ENCODE measurements at regions of chr3 and their contacts with region 1.

Region 1: DNA sequence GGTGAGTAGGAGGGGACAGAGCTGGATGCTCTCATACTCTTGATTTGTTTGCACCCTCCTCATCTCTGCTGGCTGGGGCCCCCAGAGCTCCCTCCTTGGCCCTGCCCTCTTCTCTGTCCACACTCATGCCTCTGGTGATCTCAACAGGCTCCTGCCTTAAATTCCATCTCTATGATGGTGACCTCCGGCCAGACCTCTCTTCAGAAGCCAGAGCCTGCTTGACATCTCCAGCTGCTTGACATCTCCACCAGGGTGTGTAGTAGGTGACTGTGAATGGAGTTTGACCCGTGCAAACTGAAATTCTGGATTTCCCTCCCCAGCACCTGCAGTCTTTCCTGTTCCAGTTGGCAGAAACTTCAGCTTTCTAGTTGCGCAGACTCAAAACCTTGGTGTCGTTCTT is 4.3 kb upstream of the FGD5 start:
- DNase-seq: no peak
- ATAC-seq: no peak
- H3K4me3 ChIP-seq: no peak overlapping the region
- H3K27ac ChIP-seq: no peak overlapping the region
- H3K4me1 ChIP-seq: no peaks in the 10 kb centered on the region
- H3K27me3 ChIP-seq: peaks cover 32% of the 10 kb centered on the region
- CTCF ChIP-seq: no peak
- POLR2A ChIP-seq: no peak
- RAD21 ChIP-seq: no peak

Region 2: DNA sequence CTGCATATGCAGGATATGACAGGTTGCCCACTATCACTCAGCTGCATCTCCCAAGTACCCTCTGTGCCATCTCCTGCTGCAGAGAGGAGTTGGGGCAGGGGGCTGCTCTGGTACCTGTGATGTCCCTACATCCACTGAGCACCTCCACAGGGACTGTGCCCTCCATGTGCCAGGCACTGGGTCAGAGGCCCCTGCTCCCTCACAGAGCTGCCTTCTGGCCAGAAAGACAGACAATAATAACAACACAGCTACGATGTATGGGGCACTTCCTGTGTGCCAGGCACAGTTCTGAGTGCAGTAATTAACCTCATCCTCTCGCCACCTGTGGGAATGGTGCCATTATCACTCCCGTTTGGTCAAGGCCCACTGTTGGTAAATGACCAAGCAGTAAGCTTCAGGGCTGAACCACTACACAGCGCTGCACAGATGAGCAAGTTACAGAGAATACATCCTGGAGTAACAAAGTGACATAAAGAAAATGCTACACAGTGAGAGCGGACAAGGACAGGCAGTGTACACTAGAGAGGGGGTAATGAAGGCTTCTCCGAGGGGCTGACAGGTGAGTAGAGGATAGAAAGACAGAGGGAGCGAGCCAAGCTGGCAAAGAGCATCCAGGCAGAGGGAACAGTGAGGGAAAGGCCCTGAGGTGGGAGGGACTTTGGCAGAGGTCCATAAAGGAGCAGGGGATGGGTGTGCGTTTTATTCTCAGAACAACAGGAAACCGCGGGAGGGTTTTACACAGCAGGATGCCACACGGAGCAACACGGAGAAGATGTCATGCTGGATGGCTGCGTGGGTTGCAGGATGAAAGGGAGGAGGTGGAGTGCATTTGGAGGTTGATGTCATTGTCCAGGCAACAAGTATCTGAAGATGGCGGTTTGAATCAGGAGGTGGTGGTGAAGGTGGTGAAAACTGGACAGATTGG is 948.2 kb before region 1 on chr3:
- CTCF ChIA-PET with region 1: no interaction called
- POLR2A ChIA-PET with region 1: interaction called, 10 read pairs
- dilution Hi-C with region 1: no loop called
- in situ Hi-C with region 1: no loop called
- intact Hi-C with region 1: no loop called
- DNase-seq: no peak
- ATAC-seq: no peak
- H3K4me3 ChIP-seq: no peak overlapping the region
- H3K27ac ChIP-seq: no peak overlapping the region
- H3K4me1 ChIP-seq: no peaks in the 10 kb centered on the region
- H3K27me3 ChIP-seq: no peaks in the 10 kb centered on the region; the same call in 1 of the 2 replicates
- CTCF ChIP-seq: no peak
- POLR2A ChIP-seq: no peak
- RAD21 ChIP-seq: no peak

Region 3: DNA sequence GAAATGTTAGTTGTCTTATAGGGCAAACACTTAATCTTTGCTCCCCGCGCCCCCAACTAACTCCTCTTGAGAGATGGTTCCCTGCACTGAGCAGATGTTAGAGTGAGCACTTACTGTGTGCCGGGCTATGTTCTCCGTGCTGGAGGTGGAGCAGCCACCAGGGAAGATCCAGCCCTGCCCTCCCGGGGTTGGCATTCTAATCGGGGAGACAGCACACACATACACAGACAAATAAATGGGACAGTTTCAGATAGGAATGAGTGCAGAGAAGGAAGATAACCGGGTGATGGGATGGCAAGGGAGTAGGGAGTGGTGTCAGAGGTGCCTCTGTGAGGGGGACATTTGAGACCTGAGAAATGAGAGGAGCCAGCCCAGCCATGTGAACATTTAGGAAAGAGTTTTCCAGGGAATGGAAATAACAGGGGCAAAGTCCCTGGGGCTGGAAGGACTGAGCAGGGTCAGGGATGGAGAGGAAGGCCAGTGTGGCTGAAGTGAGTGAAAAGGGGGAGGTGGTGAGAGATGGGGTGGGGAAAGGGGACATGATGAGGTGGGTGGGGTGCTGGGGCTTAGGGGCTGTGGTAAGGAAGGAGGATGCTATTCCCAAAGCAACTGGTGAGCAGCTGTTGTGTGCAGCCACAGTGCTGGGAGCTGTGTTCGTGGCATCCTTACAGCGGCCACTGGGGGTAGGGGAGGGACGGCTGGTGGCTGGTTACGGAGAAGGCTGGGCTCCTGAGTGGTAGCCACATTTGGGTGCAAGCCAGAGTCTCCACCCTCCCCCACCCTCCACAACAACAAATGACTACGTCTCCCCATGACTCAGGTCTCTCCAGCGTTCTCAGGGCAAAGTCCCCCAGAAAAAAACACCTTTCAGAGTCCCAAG is 11.1 kb before region 1 on chr3:
- CTCF ChIA-PET with region 1: no interaction called
- POLR2A ChIA-PET with region 1: no interaction called
- dilution Hi-C with region 1: no loop called
- in situ Hi-C with region 1: no loop called
- intact Hi-C with region 1: no loop called
- DNase-seq: no peak
- ATAC-seq: no peak; the same call in 1 of the 2 replicates
- H3K4me3 ChIP-seq: no peak overlapping the region
- H3K27ac ChIP-seq: no peak overlapping the region
- H3K4me1 ChIP-seq: no peaks in the 10 kb centered on the region
- H3K27me3 ChIP-seq: peaks cover 27% of the 10 kb centered on the region
- CTCF ChIP-seq: no peak
- POLR2A ChIP-seq: no peak
- RAD21 ChIP-seq: no peak

Region 4: GRCh38 chr3:14836049-14836468 is 21.6 kb after region 1 on chr3:
- CTCF ChIA-PET with region 1: no interaction called
- POLR2A ChIA-PET with region 1: no interaction called
- dilution Hi-C with region 1: no loop called
- in situ Hi-C with region 1: no loop called
- intact Hi-C with region 1: no loop called
- DNase-seq: no peak
- ATAC-seq: no peak
- H3K4me3 ChIP-seq: no peak overlapping the region
- H3K27ac ChIP-seq: no peak overlapping the region
- H3K4me1 ChIP-seq: no peaks in the 10 kb centered on the region
- H3K27me3 ChIP-seq: peaks cover 27% of the 10 kb centered on the region
- CTCF ChIP-seq: no peak
- POLR2A ChIP-seq: no peak
- RAD21 ChIP-seq: no peak

Measured in IMR-90 (cell line).